ENCODE measurements at regions of chrX and their contacts with region 1.

Region 1: GRCh38 chrX:53317365-53318069 is 36.1 kb upstream of the IQSEC2 start:
- DNase-seq: peak; percentile 87
- H3K4me3 ChIP-seq: no peak overlapping the region; a peak in 1 of 4 replicates
- H3K27ac ChIP-seq: no peak overlapping the region
- H3K4me1 ChIP-seq: peaks cover 0 to 18% of the 10 kb centered on the region in 2 experiments; a peak in 1 of 4 replicates
- H3K27me3 ChIP-seq: peaks cover 35% of the 10 kb centered on the region
- CTCF ChIP-seq: peak; percentile 90
- EP300 ChIP-seq: no peak
- RAD21 ChIP-seq: peak; percentile 81

Region 2: GRCh38 chrX:53088136-53088974 is 229.2 kb before region 1 on chrX:
- CTCF ChIA-PET with region 1: no interaction called
- POLR2A ChIA-PET with region 1: no interaction called
- DNase-seq: peak; percentile 86
- H3K4me3 ChIP-seq: peak overlapping the region; percentile 52 to 57
- H3K27ac ChIP-seq: peak overlapping the region; percentile 77 to 86
- H3K4me1 ChIP-seq: peaks cover 0 to 13% of the 10 kb centered on the region in 2 experiments; a peak in 1 of 4 replicates
- H3K27me3 ChIP-seq: no peaks in the 10 kb centered on the region; the same call in 1 of the 2 replicates
- CTCF ChIP-seq: no peak
- EP300 ChIP-seq: no peak
- RAD21 ChIP-seq: no peak

Region 3: GRCh38 chrX:53294024-53294648 is 23.4 kb before region 1 on chrX:
- CTCF ChIA-PET with region 1: interaction called, 53 read pairs
- POLR2A ChIA-PET with region 1: no interaction called
- DNase-seq: no peak
- H3K4me3 ChIP-seq: no peak overlapping the region
- H3K27ac ChIP-seq: no peak overlapping the region
- H3K4me1 ChIP-seq: peaks cover 0 to 12% of the 10 kb centered on the region in 2 experiments; a peak in 1 of 4 replicates
- H3K27me3 ChIP-seq: no peaks in the 10 kb centered on the region; the same call in 1 of the 2 replicates
- CTCF ChIP-seq: peak; percentile 56
- EP300 ChIP-seq: no peak
- RAD21 ChIP-seq: peak; percentile 54

Region 4: DNA sequence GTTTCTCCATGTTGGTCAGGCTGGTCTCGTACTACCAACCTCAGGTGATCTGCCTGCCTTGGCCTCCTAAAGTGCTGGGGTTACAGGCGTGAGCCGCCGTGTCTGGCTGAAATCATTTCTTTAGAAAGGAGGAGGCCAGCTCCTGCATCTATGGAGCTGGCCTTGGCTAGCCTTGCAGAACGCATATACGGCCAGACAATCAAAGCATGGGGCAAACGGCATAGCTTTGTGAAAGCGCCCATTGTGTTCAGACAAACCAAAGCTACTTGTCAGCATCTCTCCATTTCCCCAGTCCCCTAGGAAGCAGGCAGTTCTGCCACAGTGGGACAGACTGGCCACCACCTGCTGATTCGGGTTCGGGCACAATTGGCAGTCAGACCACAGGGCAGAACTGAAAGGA is 12.8 kb after region 1 on chrX:
- CTCF ChIA-PET with region 1: interaction called, 88 read pairs
- POLR2A ChIA-PET with region 1: no interaction called
- DNase-seq: no peak
- H3K4me3 ChIP-seq: no peak overlapping the region
- H3K27ac ChIP-seq: no peak overlapping the region
- H3K4me1 ChIP-seq: no peaks in the 10 kb centered on the region
- H3K27me3 ChIP-seq: peaks cover 75% of the 10 kb centered on the region
- CTCF ChIP-seq: no peak
- EP300 ChIP-seq: no peak
- RAD21 ChIP-seq: no peak

Region 5: DNA sequence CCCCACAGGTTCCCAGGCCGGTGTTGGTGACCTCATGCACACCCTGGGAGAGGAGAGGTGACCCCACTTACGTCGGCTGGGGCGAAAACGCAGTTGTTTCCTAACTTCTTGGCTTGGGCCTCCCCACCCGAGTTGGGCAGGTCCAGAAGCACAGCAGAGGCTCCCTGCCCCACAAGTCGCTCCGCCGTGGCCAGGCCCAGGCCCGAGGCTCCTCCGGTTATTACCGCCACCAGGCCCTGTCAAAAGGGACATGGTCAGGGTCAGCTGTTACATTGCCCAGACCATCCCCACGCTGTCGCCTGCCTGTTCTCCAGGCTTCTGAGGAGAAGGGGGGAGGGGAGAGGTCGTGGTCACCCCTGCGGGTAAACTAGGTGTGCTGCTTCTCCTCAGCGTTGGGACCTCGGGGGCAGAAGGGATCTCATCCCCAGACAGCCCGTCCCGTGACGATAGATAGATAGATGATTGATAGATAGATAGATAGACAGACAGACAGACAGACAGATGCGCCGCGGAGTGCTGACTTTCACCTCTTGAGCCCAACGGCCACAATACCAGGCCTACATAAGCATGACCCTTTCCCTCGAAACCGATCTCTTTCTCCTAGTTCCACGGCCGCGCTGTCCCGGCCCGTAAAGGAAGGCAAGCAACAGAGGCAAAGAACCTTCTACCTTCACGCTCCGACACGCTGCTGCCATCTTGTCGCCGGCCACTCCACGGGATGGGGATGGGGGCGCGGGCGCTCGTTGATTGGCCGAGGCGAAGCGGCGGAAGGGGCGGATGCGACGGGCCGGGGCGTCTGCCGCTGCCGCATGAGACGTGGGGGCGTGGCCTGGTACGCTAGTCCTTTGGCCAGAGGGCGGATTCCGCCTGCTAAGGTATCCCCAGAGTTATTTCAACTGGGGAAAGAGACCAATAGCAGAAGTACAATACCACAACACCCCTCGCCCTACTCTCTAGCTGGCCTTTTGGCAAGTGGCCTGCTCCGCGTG is 116.4 kb after region 1 on chrX and contains the start of gene HSD17B10:
- CTCF ChIA-PET with region 1: interaction called, 50 read pairs
- POLR2A ChIA-PET with region 1: no interaction called
- DNase-seq: peak; percentile 95
- H3K4me3 ChIP-seq: peak within 1 kb of the TSS; percentile 97 to 98
- H3K27ac ChIP-seq: peak within 1 kb of the TSS; percentile 35 to 80; a peak in 3 of 4 replicates
- H3K4me1 ChIP-seq: peaks cover 4 to 9% of the 10 kb centered on the region in 2 experiments; a peak in 1 of 4 replicates
- H3K27me3 ChIP-seq: peaks cover 10% of the 10 kb centered on the region; the same call in 1 of the 2 replicates
- CTCF ChIP-seq: no peak
- EP300 ChIP-seq: no peak
- RAD21 ChIP-seq: no peak
- polyA plus RNA-seq, gene HSD17B10: 157 and 188 TPM in 2 replicates

Region 6: DNA sequence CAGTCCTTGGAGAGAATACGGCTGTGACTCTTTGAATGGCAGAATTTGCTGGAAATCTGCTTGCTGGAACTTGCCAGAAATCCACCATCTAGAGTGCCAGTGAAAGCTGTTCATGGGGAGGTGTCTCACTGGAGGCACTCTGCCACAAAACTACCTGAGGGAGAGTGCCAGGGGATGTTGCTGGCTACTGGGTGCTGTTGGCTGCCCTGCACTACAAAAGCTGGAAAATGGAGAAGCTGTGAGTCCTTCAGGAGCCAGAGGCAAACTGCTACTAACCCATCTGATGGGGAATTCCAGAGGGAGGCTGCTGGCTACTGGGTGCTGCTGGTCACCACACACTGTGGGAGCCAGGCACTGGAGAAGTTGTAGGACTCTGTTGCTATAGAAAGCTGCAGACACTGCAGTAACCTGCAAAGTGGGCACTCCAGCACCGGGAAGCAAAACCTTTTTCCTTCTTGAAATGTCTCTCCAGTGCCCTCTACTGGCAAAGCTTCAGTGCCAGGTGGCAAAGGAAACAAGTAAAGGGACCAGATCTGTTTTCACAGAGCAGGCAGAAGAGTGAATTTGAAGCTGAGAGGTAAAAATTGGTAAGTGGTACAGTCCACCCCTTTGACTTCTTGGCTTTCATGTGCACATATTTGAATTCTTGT is 164.4 kb after region 1 on chrX:
- CTCF ChIA-PET with region 1: interaction called, 180 read pairs
- POLR2A ChIA-PET with region 1: interaction called, 5 read pairs
- DNase-seq: peak; percentile 58
- H3K4me3 ChIP-seq: no peak overlapping the region
- H3K27ac ChIP-seq: no peak overlapping the region
- H3K4me1 ChIP-seq: no peaks in the 10 kb centered on the region; a peak in 1 of 4 replicates
- H3K27me3 ChIP-seq: peaks cover 11% of the 10 kb centered on the region; the same call in 1 of the 2 replicates
- CTCF ChIP-seq: peak; percentile 81
- EP300 ChIP-seq: no peak
- RAD21 ChIP-seq: peak; percentile 74

Measured in SK-N-SH (cell line).